Activated T-helper 1 cell treated with anti-CD3 and anti-CD28 coated beads, Interleukin-12 subunit alpha, Interleukin-12 subunit beta, Interleukin-2, Interleukin-4 antibody, amounts not matched to agents 30 ng/mL and 10 ng/mL and 1 ng/mL, durations not matched to agents 14 hours and 24 hours and 36 hours (primary cell): ENCODE measurements at regions of chr5 and their contacts with region 1.

Region 1: DNA sequence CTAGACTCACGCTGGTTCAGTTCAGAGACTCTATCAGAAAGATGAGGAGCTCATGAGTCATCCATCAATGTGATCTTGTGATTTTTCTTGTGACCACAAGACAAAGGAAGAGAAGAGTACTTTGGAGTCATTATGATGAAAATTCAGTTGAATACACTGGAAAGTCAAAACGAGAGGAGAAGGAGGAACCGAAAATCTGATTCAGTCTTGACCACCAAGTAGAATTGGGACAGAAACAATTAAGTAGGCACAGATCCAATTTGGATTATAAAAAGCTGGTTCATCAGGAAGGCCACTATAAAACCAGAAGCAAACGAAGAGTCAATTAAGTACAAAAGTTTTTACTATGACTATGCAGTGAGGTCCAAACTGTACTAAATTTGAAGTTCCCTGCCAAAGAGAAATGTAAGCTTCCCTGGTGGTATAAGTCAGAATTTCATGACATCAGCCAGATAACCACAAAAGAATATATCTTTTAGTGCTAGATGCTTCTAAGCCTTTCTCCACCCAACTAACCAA is 90.9 kb downstream of the THBS4 start:
- DNase-seq: no peak
- H3K4me3 Mint-ChIP-seq: peak overlapping the region; percentile 48
- H3K27ac Mint-ChIP-seq: peak overlapping the region; percentile 70
- H3K4me1 Mint-ChIP-seq: peaks cover 23% of the 10 kb centered on the region
- H3K27me3 Mint-ChIP-seq: no peaks in the 10 kb centered on the region

Region 2: DNA sequence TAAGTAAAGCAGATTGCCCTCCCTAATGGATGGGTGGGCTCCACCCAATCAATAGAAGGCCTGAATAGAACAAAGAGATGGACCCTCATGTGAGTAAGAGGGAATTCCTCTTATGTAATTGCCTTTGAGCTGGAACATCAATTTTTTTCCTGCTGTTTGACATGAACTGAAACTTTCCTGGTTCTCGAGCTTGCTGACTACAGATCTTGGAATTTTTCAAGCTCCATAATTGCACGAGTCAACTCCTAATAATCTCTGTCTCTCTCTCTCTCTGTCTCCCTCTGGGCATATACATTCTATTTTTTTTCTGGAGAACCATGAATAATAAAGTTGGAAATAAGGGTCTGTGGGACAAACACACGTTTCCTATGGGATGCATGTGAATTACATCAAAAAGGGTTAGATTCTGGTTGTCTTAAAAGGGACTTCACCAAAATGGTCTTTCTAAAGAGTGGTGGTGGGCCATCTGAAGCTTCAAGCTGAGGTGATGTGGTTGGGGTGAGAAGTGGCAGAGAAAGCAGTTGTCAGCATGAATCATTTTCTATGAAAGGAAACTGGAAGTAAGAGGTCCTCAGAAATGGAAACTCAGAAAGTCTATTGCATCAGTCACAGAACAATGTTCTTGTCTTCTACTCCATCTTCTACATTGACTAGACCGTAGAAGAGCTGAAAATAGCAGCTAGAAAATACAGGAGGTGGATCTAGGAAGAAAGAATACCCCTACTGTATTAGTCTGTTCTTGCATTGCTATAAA is 565.1 kb before region 1 on chr5:
- intact Hi-C with region 1: loop called (anchors 5 kb)
- DNase-seq: peak; percentile 8
- H3K4me3 Mint-ChIP-seq: peak overlapping the region; percentile 67
- H3K27ac Mint-ChIP-seq: peak overlapping the region; percentile 89
- H3K4me1 Mint-ChIP-seq: peaks cover 44% of the 10 kb centered on the region
- H3K27me3 Mint-ChIP-seq: no peaks in the 10 kb centered on the region

Region 3: DNA sequence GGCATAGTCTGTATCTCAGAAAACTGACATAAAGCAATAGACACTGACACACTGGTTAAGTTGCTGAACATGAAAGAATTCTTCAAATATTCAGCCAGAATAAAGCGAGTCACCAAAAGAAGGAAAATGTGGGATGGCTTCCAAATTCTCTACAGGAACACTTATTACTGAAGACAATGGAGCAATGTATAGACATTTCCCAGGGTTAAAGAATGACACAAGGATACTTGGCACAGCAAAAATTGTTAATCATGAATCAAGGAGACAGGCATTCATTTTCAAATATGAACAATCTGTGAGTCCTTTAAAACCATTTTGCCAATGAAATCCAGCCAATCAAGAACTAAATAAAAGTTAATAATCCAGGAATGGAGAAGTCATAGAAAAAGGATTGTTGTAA is 227.4 kb before region 1 on chr5:
- intact Hi-C with region 1: no loop called
- DNase-seq: no peak
- H3K4me3 Mint-ChIP-seq: no peak overlapping the region
- H3K27ac Mint-ChIP-seq: no peak overlapping the region
- H3K4me1 Mint-ChIP-seq: no peaks in the 10 kb centered on the region
- H3K27me3 Mint-ChIP-seq: peaks cover 30% of the 10 kb centered on the region

Region 4: GRCh38 chr5:80093796-80094195 is 32.2 kb before region 1 on chr5:
- intact Hi-C with region 1: loop called (anchors 2 kb)
- DNase-seq: no peak
- H3K4me3 Mint-ChIP-seq: no peak overlapping the region
- H3K27ac Mint-ChIP-seq: no peak overlapping the region
- H3K4me1 Mint-ChIP-seq: peaks cover 15% of the 10 kb centered on the region
- H3K27me3 Mint-ChIP-seq: no peaks in the 10 kb centered on the region

Region 5: DNA sequence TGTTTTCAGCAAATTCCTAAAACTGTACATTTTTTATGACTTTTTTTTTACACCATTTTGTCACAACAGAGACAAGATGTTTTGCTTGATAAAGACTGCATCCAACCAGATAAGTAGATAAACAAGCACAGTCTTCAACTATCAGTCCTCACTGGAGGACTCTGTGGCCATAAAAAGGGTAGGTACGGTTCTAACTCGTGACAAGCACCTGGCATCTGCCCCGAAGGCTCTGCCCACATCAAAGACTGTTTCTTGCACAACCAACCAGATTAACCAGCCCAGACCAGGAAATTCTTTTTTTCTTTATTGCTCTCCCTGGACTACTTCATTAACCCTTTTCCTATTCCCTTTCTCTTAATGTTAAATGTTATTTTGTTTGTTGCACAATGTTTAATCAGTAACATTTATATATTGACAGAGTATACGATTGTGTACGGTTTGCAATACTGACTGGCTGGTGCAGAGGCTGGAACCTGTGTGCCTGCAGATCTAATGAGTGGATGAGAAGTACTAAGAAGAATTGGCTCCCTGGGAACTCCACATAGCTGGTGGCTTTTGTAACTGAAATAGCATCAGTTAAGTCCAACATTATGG is 55.7 kb after region 1 on chr5:
- intact Hi-C with region 1: loop called (anchors 2 kb)
- DNase-seq: peak; percentile 41
- H3K4me3 Mint-ChIP-seq: peak overlapping the region; percentile 62
- H3K27ac Mint-ChIP-seq: peak overlapping the region; percentile 85
- H3K4me1 Mint-ChIP-seq: peaks cover 68% of the 10 kb centered on the region
- H3K27me3 Mint-ChIP-seq: no peaks in the 10 kb centered on the region

Region 6: DNA sequence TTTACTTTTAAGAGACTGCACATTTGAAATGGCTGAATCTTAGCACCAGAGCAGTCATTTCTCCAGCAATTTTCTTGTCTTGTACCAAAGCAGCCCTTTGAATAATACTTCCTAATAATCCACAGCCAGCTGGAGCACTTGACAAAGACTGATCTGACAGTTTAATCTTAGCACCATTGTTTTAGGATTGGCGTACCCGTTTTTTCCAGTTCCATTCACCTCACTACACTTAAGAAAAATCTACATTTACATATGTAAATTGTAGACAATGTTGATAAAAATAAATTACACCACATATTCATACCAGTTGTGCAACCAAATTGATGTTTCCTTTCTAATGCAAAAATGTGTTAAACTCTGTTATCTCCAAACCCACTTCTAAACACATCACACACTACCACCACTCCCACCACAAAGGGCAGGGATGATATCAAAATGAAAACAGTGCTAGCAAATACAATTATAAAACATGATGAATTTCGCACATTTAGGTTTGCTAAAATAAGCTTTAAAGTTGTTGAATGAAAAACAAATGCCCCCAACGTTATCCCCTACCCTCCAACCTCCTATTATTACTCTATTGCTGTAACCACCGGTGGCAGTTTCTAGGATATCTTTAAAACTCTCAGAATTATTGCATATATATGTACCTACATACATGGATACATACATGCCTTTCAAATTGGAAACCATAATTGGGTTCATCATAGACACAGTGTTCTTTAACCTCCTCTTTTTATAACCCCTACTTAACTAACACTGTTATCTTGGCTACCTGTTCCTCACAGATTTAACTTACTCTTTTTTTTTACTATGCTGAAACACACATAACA is 108.3 kb after region 1 on chr5:
- intact Hi-C with region 1: loop called (anchors 1 kb)
- DNase-seq: no peak
- H3K4me3 Mint-ChIP-seq: no peak overlapping the region
- H3K27ac Mint-ChIP-seq: peak overlapping the region; percentile 25
- H3K4me1 Mint-ChIP-seq: peaks cover 35% of the 10 kb centered on the region
- H3K27me3 Mint-ChIP-seq: no peaks in the 10 kb centered on the region

Region 7: DNA sequence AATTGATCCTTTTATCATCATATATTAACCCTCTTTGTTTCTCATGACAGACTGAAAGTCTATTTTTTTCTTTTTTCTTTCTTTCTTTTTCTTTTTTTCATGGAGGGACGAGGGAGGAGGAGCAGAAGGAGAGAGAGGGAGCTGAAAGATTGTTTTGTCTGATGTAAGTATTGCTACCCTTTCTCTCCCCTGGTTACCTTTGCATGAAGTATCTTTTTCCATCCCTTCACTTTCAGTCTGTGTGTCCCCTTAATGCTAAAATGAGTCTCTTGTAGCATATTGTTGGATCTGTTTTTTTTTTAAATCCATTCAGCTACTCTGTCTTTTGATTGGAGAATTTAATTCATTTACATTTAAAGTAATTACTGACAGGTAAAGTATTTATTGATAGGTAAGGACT is 157.3 kb after region 1 on chr5:
- intact Hi-C with region 1: loop called (anchors 1 kb)
- DNase-seq: no peak
- H3K4me3 Mint-ChIP-seq: no peak overlapping the region
- H3K27ac Mint-ChIP-seq: peak overlapping the region; percentile 25
- H3K4me1 Mint-ChIP-seq: peaks cover 18% of the 10 kb centered on the region
- H3K27me3 Mint-ChIP-seq: no peaks in the 10 kb centered on the region